MCF 10A (cell line): ENCODE measurements at regions of chr1 and their contacts with region 1.

Region 1: DNA sequence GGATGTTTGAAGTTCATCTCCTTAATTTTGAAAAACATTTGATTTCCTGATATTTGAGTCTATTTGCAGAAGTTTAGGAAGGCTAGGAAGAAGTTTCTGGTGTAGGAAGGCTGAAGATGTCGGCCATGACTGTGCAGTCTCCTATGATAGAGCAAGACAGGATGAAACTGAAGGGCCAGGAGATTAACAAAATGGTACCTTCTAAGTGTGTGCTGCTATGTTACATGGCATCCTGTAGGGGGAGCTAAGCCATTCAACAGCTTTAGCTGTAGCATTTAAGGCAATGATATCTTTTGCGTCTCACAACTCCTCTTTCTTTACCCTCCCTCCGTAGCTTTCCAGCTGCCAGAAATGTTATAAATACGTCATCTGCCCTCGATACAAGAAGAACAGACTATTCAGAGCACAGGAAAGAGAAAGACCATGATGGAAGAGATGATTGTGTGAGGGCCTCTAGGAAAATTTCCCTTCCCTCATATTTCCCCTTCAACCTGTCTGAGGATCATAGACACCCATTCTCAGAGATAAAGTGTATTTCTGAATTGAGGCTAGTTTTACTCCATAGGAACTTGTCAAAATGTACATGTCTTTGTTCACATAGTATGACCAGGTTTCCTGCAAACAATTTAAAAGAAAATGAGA is 61.1 kb downstream of the XCL1 start:
- DNase-seq: peak; percentile 64
- H3K4me3 Mint-ChIP-seq: peak overlapping the region; percentile 38
- H3K27ac Mint-ChIP-seq: peak overlapping the region; percentile 84
- H3K4me1 Mint-ChIP-seq: peaks cover 25% of the 10 kb centered on the region
- H3K27me3 Mint-ChIP-seq: no peaks in the 10 kb centered on the region
- CTCF ChIP-seq: peak; percentile 86

Region 2: DNA sequence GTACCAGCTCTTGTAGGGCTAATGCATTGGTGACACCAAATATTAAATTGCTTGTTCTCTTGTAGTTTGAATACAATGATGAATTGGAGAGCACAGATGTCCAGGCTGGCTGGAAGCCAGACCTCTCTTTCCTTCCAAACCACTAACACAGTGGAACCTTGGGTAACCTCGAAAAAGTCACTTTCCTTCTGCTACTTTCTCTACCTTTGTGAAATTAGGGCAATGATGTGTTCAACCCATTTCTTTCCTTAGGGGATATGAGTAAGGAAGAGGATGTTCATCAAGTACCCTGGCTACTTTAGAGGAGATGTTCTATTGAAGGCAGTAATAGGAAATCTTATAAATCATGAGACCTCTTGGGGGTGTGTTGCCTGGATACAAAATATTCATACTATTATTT is 149.3 kb before region 1 on chr1:
- CTCF ChIA-PET with region 1: no interaction called
- POLR2A ChIA-PET with region 1: no interaction called
- intact Hi-C with region 1: no loop called
- DNase-seq: peak; percentile 72
- H3K4me3 Mint-ChIP-seq: no peak overlapping the region
- H3K27ac Mint-ChIP-seq: no peak overlapping the region
- H3K4me1 Mint-ChIP-seq: peaks cover 20% of the 10 kb centered on the region
- H3K27me3 Mint-ChIP-seq: no peaks in the 10 kb centered on the region
- CTCF ChIP-seq: no peak

Region 3: GRCh38 chr1:168591066-168591465 is 46.4 kb before region 1 on chr1:
- CTCF ChIA-PET with region 1: no interaction called
- POLR2A ChIA-PET with region 1: no interaction called
- intact Hi-C with region 1: no loop called
- DNase-seq: no peak
- H3K4me3 Mint-ChIP-seq: no peak overlapping the region
- H3K27ac Mint-ChIP-seq: no peak overlapping the region
- H3K4me1 Mint-ChIP-seq: no peaks in the 10 kb centered on the region
- H3K27me3 Mint-ChIP-seq: no peaks in the 10 kb centered on the region
- CTCF ChIP-seq: no peak

Region 4: DNA sequence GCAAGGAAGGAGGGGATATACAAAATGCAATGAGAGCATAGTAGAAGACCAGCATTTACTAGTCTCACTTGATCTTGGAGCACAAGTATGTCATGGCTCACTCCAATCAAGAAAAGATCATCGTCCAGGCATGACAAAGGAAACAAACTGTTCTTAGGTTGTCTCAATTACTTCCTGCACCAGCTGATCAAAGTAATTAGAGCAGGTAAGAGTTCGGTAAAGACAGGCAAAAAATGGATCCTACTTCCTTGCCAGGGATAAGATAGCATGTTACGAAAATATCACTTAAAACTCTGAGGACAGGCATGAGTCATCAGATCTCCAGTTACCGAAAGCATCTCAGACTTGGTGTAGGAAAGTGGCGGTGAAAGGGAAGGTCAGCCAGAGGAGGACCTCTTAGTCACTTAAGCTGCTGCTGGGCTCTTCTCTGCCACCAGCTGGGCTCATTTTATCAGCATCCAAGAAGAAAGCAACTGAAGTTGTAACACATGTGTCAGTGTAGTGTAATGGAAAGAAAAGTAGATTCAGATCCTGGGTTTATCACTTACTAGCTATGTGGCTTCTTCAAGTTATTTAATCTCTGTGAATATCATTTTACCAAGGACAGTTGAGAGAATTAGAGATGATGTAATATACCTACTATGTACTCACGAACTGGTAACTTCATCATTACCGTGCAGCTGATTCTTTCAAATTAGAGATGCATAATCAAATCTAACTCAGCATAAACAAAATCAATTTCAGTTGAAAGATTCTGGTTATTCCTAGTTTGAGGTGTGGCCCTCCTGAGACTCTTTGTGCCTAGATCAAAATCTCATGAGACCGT is 14.3 kb before region 1 on chr1:
- CTCF ChIA-PET with region 1: interaction called, 13 read pairs
- POLR2A ChIA-PET with region 1: interaction called, 18 read pairs
- intact Hi-C with region 1: no loop called
- DNase-seq: peak; percentile 91
- H3K4me3 Mint-ChIP-seq: no peak overlapping the region
- H3K27ac Mint-ChIP-seq: no peak overlapping the region
- H3K4me1 Mint-ChIP-seq: peaks cover 7% of the 10 kb centered on the region
- H3K27me3 Mint-ChIP-seq: no peaks in the 10 kb centered on the region
- CTCF ChIP-seq: no peak

Region 5: GRCh38 chr1:168719306-168720111 is 82.0 kb after region 1 on chr1:
- CTCF ChIA-PET with region 1: interaction called, 24 read pairs
- POLR2A ChIA-PET with region 1: interaction called, 4 read pairs
- intact Hi-C with region 1: no loop called
- DNase-seq: peak; percentile 96
- H3K4me3 Mint-ChIP-seq: no peak overlapping the region
- H3K27ac Mint-ChIP-seq: peak overlapping the region; percentile 83
- H3K4me1 Mint-ChIP-seq: peaks cover 24% of the 10 kb centered on the region
- H3K27me3 Mint-ChIP-seq: no peaks in the 10 kb centered on the region
- CTCF ChIP-seq: no peak

Region 6: GRCh38 chr1:168920456-168921094 is 283.1 kb after region 1 on chr1:
- CTCF ChIA-PET with region 1: no interaction called
- POLR2A ChIA-PET with region 1: no interaction called
- intact Hi-C with region 1: no loop called
- DNase-seq: peak; percentile 55
- H3K4me3 Mint-ChIP-seq: no peak overlapping the region
- H3K27ac Mint-ChIP-seq: no peak overlapping the region
- H3K4me1 Mint-ChIP-seq: peaks cover 11% of the 10 kb centered on the region
- H3K27me3 Mint-ChIP-seq: no peaks in the 10 kb centered on the region
- CTCF ChIP-seq: no peak

Region 7: DNA sequence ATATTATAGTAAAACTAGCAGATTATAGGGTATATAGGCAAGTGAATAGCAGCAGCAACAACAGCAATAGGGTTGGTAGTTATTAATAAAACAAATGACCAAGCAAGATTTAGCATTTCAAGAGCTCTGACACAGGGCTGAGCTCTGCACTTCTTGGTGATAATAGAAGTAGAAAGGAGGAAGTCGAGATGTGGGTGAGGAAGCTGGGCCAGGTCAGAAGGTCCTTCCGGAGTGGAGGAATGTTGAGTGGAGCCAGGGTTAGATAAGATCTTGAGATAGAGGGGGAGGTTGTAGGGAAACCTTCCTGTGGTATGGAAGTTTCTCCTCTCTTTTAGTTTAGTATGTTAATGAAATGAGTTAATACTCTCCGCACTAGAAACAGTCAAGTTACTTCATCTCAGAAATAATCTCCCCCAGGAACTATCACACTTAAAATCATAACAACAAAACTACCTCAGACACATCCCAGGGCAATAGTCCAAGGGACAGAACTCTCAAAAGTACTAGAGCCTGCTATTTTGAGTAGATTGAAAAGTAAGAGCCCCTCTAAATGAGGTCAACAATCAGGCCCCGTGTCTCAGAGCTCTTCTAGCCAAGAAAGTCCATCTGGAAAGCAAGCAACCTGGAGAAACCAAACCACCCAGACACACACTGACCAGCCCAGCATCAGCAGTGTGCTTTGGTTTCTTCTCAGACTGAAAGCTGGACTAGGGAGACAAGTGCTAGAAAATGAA is 423.6 kb after region 1 on chr1:
- CTCF ChIA-PET with region 1: interaction called, 9 read pairs
- POLR2A ChIA-PET with region 1: interaction called, 18 read pairs
- intact Hi-C with region 1: no loop called
- DNase-seq: no peak
- H3K4me3 Mint-ChIP-seq: no peak overlapping the region
- H3K27ac Mint-ChIP-seq: peak overlapping the region; percentile 79
- H3K4me1 Mint-ChIP-seq: peaks cover 23% of the 10 kb centered on the region
- H3K27me3 Mint-ChIP-seq: no peaks in the 10 kb centered on the region
- CTCF ChIP-seq: no peak

Region 8: GRCh38 chr1:169115891-169116585 is 478.6 kb after region 1 on chr1:
- CTCF ChIA-PET with region 1: interaction called, 135 read pairs
- POLR2A ChIA-PET with region 1: interaction called, 13 read pairs
- intact Hi-C with region 1: no loop called
- DNase-seq: no peak
- H3K4me3 Mint-ChIP-seq: no peak overlapping the region
- H3K27ac Mint-ChIP-seq: peak overlapping the region; percentile 49
- H3K4me1 Mint-ChIP-seq: peaks cover 60% of the 10 kb centered on the region
- H3K27me3 Mint-ChIP-seq: no peaks in the 10 kb centered on the region
- CTCF ChIP-seq: no peak

Region 9: DNA sequence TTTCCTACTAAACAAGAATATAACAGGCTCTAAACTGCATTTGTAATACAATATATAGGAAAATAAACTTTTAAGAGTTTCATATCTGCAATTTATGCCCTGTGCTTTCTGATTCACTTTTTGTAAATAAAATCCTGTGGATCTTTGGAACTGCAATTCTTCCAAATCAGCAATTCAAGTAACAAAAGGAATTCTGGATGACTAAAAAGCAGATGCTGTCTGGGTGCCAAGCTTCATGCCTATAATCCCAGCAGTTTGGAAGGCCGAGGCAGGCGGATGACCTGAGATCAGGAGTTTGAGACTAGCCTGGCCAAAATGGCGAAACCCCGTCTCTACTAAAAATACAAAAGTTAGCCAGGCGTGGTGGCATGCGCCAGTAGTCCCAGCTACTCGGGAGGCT is 723.8 kb after region 1 on chr1:
- CTCF ChIA-PET with region 1: interaction called, 16 read pairs
- POLR2A ChIA-PET with region 1: interaction called, 7 read pairs
- intact Hi-C with region 1: loop called (anchors 5 kb)
- DNase-seq: no peak
- H3K4me3 Mint-ChIP-seq: no peak overlapping the region
- H3K27ac Mint-ChIP-seq: no peak overlapping the region
- H3K4me1 Mint-ChIP-seq: peaks cover 17% of the 10 kb centered on the region
- H3K27me3 Mint-ChIP-seq: no peaks in the 10 kb centered on the region
- CTCF ChIP-seq: no peak